ENCODE measurements at regions of chr13 and their contacts with region 1.

Region 1: DNA sequence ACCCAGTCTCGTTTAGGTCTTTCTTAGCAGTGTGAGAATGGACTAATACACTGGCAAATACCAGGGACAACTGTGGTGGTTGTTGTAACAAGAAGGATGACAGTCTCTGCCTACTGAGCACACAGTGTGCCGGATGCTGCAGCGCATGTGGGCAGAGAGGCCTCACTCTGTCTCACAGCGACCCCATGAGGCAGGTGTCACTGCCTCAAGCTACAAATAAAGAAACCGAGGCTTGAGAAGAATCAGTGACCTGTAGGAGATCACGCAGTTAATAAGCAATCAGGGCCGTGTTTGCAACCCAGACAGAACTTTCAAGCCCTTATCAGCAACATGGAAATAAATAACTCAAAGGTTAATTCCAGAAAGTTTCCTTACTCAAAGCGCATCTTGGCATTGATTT is 40.5 kb upstream of the GAS6 start:
- DNase-seq: peak in 1 of 3 donors; percentile 63
- ATAC-seq: peak; percentile 85 to 97 (median 90)
- H3K4me3 ChIP-seq: no peak overlapping the region
- H3K27ac ChIP-seq: no peak overlapping the region
- H3K4me1 ChIP-seq: no peaks in the 10 kb centered on the region
- H3K27me3 ChIP-seq: no peaks in the 10 kb centered on the region
- CTCF ChIP-seq: peak; percentile 47 to 74 (median 64)
- POLR2A ChIP-seq: no peak

Region 2: GRCh38 chr13:113816946-113817859 is 87.2 kb before region 1 on chr13:
- intact Hi-C with region 1: loop called in 1 of 2 experiments (anchors 10 kb)
- DNase-seq: peak; percentile 90 to 93 (median 92)
- ATAC-seq: peak; percentile 66 to 79 (median 76)
- H3K4me3 ChIP-seq: no peak overlapping the region
- H3K27ac ChIP-seq: no peak overlapping the region
- H3K4me1 ChIP-seq: peaks cover 0 to 2% (median 0%) of the 10 kb centered on the region in 4 donors
- H3K27me3 ChIP-seq: no peaks in the 10 kb centered on the region
- CTCF ChIP-seq: peak; percentile 72 to 92 (median 80)
- POLR2A ChIP-seq: no peak

Region 3: DNA sequence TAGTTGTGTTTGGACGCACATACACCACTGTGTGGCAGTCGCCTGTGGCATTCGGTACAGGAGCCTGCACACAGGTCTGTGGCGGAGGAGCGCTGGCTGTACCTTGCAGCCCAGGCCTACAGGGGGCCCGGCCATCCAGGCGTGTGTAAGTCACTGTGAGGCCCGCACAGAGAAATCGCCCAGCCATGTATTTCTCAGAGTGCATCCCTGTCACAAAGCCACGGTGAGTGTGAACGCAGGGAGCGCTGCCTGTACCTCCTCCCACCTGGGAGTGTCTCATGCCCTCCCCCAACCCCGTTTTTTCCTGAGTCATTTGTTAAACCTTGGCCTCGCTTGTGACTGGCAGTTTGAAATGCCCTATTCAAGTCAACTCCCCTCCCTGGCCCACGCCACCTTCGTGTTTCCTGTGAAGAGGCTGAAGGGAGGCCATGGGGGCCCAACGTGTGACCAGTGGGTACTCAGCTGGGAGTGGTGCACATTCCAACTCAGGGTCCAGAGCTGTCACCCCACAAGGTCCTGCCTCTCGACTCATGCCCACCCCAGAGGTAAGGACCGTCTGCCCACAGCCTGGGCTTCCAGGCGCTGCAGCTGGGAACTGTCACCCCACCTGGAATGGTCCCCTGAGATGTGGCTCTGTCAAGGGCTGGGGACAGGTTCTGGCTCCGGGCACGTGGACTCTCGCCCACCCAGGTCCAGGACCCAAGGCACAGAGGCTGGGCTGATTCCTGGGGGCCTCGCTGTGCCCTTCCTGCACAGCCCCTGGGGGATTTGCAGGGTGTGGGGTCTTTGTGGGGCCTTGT is 239.6 kb after region 1 on chr13:
- intact Hi-C with region 1: no loop called
- DNase-seq: peak in 2 of 3 donors; percentile 38 to 51
- ATAC-seq: no peak
- H3K4me3 ChIP-seq: no peak overlapping the region
- H3K27ac ChIP-seq: no peak overlapping the region
- H3K4me1 ChIP-seq: no peaks in the 10 kb centered on the region
- H3K27me3 ChIP-seq: no peaks in the 10 kb centered on the region
- CTCF ChIP-seq: no peak
- POLR2A ChIP-seq: no peak